Transverse colon (tissue), 4 donors: ENCODE measurements at regions of chr3 and their contacts with region 1.

Region 1: DNA sequence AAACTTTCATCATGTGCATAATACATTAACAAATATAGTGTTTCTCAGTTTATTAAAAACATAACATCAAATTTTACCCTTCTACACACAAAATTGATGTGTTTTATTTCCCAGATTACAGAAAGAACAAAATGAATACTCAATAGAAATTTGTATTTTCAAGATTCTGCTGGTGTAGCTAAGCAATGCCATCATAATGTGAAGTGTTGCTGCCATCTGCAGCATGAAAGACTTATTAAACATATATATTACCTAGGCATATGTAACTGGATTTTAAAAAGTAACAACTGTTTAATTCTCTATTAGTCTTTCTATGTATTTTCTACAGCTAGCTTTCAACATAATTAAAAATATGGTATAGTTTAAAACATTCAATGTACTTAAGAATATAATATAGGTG is 27.5 kb downstream of the PLSCR5 start:
- DNase-seq: peak; percentile 25
- H3K4me3 ChIP-seq: no peak overlapping the region
- H3K27ac ChIP-seq: no peak overlapping the region
- H3K4me1 ChIP-seq: no peaks in the 10 kb centered on the region
- H3K27me3 ChIP-seq: no peaks in the 10 kb centered on the region
- CTCF ChIP-seq: peak; percentile 38 to 50 (median 42)
- EP300 ChIP-seq: no peak
- POLR2A ChIP-seq: no peak

Region 2: DNA sequence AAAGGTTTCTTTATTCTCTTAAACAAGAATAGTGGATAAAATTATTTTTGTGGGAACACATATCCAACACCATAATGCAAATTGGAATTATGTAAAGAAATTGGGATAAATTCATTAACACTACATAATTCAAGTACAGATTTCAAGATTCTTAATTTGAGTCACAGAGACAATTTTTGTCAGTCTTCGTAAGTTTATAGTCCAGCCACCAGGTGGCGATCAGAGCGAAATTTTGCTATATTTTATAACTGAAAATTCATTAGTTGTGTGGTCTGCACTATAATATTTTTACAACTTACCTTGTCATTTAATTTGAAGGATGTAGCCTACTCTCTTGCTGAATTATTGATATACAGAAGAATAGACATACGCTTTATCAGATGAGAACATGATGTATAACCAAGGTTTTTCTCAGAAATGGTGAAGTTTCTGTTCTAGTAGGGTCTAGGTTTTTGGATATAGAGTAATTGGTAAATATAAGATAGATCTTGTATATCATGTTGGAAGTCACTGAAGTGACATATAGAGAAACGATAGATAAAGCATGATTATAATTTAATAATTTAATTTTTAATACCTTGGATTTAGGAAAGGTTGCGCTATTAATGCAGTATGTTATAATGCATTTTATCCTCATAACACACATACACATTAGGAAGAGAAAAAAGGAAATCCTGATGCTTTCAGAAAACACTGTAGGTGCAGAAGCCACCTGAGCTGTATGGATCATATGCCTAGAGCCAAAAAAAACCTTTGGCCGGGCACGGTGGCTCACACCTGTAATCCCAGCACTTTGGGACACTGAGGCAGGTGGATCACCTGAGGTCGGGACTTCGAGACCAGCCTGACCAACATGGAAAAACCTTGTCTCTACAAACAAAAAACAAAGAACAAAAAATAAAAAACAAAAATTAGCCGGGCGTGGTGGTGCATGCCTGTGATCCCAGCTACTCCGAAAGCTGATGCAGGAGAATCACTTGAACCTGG is 358.5 kb before region 1 on chr3:
- in situ Hi-C with region 1: loop called (anchors 10 to 25 kb)
- intact Hi-C with region 1: no loop called
- DNase-seq: peak; percentile 26
- H3K4me3 ChIP-seq: no peak overlapping the region
- H3K27ac ChIP-seq: no peak overlapping the region
- H3K4me1 ChIP-seq: peaks cover 0 to 45% (median 22%) of the 10 kb centered on the region in 4 donors
- H3K27me3 ChIP-seq: no peaks in the 10 kb centered on the region
- CTCF ChIP-seq: peak; percentile 68 to 82 (median 74)
- EP300 ChIP-seq: no peak
- POLR2A ChIP-seq: no peak

Region 3: DNA sequence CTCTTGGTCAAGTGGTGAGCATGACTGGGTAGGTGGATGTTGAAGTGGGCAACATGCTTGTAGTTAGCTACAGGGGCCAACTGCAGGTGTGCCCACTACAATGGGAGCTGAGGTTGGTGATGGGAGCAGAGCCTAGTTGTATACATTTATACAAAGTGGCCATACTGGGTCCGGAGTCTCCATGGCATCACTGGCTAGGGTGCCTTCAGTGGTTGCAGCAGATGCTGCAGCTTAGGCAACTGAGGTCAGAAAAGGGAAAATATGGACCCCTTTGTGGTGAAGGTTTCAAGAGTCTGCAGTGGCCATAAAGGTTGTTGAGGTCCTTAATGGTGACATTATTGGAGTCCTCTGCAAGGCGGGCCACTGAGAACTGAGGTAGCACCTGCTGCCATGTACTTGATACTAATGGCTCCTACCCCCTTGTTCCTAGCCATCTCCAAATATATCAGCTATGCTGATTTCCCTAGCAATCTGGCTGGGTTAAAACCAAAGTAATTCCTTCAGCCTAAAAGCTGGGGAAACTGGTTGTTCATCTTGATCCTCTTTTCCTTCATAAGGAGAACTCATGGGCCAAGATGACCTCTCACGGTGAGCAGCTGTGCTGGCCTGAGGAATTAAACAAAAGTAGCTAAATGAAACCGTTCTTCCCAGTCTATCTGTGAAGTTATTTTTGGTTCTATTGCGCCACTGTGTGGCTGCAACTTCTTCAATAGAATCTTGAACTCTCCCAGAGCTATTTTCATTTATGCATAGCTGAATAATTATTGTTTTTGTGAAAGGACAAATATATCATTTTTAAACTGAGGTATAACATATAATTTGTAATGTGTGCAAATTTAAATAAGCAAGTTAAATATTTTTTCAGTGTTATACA is 250.8 kb before region 1 on chr3:
- in situ Hi-C with region 1: loop called in 3 of 4 experiments (anchors 10 to 25 kb)
- intact Hi-C with region 1: no loop called
- DNase-seq: peak; percentile 49
- H3K4me3 ChIP-seq: no peak overlapping the region
- H3K27ac ChIP-seq: no peak overlapping the region
- H3K4me1 ChIP-seq: no peaks in the 10 kb centered on the region
- H3K27me3 ChIP-seq: no peaks in the 10 kb centered on the region
- CTCF ChIP-seq: peak; percentile 43 to 76 (median 61)
- EP300 ChIP-seq: no peak
- POLR2A ChIP-seq: no peak

Region 4: DNA sequence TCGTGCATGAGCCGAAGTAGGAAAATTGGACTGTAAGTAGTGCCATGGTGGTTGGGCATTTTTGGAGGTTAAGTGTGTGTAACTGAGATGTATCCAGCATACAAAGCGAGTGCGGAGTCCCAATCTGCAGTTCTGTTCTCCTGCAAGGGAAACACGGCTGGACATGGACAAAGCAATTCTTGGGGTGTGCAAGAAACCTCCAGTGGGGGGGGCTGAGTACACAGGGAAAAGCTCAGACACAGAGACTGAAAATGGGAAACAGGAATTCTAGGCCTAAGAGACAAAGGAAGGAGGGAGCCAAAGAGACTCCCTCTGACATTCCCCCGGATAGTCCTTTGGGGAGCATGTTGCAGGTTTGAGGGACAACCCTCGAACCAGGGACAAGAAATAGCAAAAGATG is 243.5 kb before region 1 on chr3:
- in situ Hi-C with region 1: loop called in 3 of 4 experiments (anchors 10 to 25 kb)
- intact Hi-C with region 1: no loop called
- DNase-seq: no peak
- H3K4me3 ChIP-seq: no peak overlapping the region
- H3K27ac ChIP-seq: no peak overlapping the region
- H3K4me1 ChIP-seq: no peaks in the 10 kb centered on the region
- H3K27me3 ChIP-seq: no peaks in the 10 kb centered on the region
- CTCF ChIP-seq: no peak
- EP300 ChIP-seq: no peak
- POLR2A ChIP-seq: no peak

Region 5: GRCh38 chr3:148420242-148420641 is 1842.6 kb after region 1 on chr3:
- in situ Hi-C with region 1: no loop called
- intact Hi-C with region 1: no loop called
- DNase-seq: no peak
- H3K4me3 ChIP-seq: no peak overlapping the region
- H3K27ac ChIP-seq: no peak overlapping the region
- H3K4me1 ChIP-seq: no peaks in the 10 kb centered on the region
- H3K27me3 ChIP-seq: no peaks in the 10 kb centered on the region
- CTCF ChIP-seq: no peak
- EP300 ChIP-seq: no peak
- POLR2A ChIP-seq: no peak